Activated CD4-positive, alpha-beta memory T cell treated with anti-CD3 and anti-CD28 coated beads, Interleukin-2, amount 10 ng/mL, durations not matched to agents 7 days and 5 days (primary cell): ENCODE measurements at regions of chr5 and their contacts with region 1.

Region 1: DNA sequence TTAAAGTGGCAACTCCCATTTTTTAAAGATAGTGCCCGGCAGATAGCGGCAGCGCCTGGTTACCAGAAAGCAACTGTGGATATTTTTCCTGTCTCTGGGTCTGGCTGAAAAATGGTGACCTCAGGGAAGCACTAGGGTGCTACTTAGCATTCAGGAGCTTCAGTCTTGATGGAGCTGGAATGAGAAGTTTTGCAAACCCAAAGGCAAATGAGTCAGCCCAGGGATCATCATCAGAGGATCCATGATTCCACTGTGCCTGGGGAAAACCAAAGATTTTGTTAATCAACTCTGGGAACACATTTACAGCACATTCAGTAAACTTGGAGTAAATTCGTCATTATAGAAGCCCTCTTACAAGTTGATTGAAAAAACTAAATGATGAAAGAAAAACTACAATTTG is 26.7 kb downstream of the F2R start:
- DNase-seq: no peak
- H3K4me3 Mint-ChIP-seq: no peak overlapping the region
- H3K27ac Mint-ChIP-seq: no peak overlapping the region
- H3K4me1 Mint-ChIP-seq: peaks cover 38% of the 10 kb centered on the region
- H3K27me3 Mint-ChIP-seq: no peaks in the 10 kb centered on the region

Region 2: DNA sequence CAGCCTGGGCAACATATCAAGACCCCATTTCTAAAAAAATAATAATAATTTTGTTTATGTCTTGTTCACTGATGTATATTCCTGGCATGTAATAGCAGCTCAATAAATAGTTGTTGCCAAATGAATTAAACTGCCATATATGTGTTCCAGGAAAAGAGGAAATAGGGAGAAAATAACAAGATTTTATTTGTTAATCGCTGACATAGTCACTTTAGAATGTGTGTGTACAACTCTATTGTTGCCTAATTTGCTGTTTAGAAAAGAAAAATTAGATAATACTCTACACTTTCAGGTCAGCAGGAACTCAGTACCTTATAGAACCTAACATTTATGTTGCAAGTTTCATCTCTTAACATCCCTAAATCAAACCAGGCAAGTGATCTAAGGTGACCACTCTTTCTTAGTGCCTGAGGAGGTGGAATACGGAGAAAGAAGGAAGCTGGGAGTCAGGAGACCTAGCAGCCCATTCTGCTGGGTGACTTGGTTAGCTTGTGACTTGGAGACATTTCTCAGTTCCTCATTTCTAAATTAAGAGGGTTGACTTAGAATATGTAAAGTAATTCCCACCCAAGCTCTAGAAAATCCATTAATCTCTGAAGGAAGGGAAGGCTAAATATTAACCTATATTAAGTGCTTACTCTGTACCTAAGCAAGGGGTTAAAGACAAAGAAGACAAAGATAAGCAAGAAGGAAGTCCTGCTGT is 449.8 kb before region 1 on chr5:
- CTCF ChIA-PET with region 1: no interaction called
- POLR2A ChIA-PET with region 1: no interaction called
- DNase-seq: no peak
- H3K4me3 Mint-ChIP-seq: no peak overlapping the region
- H3K27ac Mint-ChIP-seq: no peak overlapping the region
- H3K4me1 Mint-ChIP-seq: peaks cover 3% of the 10 kb centered on the region
- H3K27me3 Mint-ChIP-seq: peaks cover 10% of the 10 kb centered on the region

Region 3: GRCh38 chr5:76765249-76765648 is 22.7 kb after region 1 on chr5:
- CTCF ChIA-PET with region 1: no interaction called
- POLR2A ChIA-PET with region 1: interaction called, 14 read pairs
- DNase-seq: no peak
- H3K4me3 Mint-ChIP-seq: no peak overlapping the region
- H3K27ac Mint-ChIP-seq: no peak overlapping the region
- H3K4me1 Mint-ChIP-seq: peaks cover 19% of the 10 kb centered on the region
- H3K27me3 Mint-ChIP-seq: no peaks in the 10 kb centered on the region